ENCODE measurements at regions of chr4 and their contacts with region 1.

Region 1: GRCh38 chr4:40721730-40722171 is 28.0 kb upstream of the NSUN7 start:
- DNase-seq: no peak
- ATAC-seq: no peak
- H3K4me3 ChIP-seq: no peak overlapping the region
- H3K4me3 Mint-ChIP-seq: no peak overlapping the region
- H3K27ac ChIP-seq: no peak overlapping the region
- H3K27ac Mint-ChIP-seq: no peak overlapping the region
- H3K4me1 ChIP-seq: peaks cover 2 to 15% of the 10 kb centered on the region in 2 experiments
- H3K4me1 Mint-ChIP-seq: peaks cover 0 to 7% (median 6%) of the 10 kb centered on the region in 3 donors
- H3K27me3 ChIP-seq: no peaks in the 10 kb centered on the region
- H3K27me3 Mint-ChIP-seq: no peaks in the 10 kb centered on the region

Region 2: DNA sequence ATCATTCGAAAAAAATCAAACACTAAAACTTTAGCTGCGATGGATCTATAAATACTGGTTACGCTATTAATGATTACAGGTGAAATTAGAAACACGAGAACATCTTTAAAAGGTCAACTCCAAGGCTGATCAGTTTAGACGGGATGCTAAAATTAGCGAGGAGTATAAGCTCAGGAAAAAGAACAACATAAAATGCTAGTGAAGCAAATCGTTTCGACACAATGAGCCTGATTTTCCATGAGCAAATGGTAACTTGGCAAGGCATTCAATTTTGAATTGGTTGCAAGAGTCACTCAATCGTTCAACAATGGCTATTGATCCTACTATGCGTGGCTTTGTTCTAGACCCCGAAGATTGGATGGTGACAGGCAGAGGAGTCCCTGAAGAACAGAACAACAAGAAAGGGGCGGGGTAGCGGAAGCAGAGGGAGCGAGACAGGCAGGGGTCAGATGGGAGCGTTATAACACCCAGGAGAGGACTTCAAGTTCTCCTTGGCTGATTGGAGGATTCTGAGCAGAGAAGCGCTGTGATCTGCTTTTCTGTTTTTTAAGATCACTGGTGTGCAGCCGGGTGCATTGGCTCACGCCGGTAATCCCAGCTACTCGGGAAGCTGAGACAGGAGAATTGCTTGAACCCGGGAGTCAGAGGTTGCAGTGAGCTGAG is 238.6 kb before region 1 on chr4:
- CTCF ChIA-PET with region 1: no interaction called
- POLR2A ChIA-PET with region 1: interaction called in 1 of 2 experiments, 11 read pairs
- DNase-seq: no peak
- ATAC-seq: no peak
- H3K4me3 ChIP-seq: no peak overlapping the region
- H3K4me3 Mint-ChIP-seq: no peak overlapping the region
- H3K27ac ChIP-seq: no peak overlapping the region
- H3K27ac Mint-ChIP-seq: no peak overlapping the region
- H3K4me1 ChIP-seq: no peaks in the 10 kb centered on the region
- H3K4me1 Mint-ChIP-seq: no peaks in the 10 kb centered on the region
- H3K27me3 ChIP-seq: peaks cover 0 to 7% of the 10 kb centered on the region in 2 experiments
- H3K27me3 Mint-ChIP-seq: peaks cover 4 to 15% of the 10 kb centered on the region in 2 donors

Measured in T-cell (primary cell).